ENCODE measurements at regions of chr7 and their contacts with region 1.

Region 1: DNA sequence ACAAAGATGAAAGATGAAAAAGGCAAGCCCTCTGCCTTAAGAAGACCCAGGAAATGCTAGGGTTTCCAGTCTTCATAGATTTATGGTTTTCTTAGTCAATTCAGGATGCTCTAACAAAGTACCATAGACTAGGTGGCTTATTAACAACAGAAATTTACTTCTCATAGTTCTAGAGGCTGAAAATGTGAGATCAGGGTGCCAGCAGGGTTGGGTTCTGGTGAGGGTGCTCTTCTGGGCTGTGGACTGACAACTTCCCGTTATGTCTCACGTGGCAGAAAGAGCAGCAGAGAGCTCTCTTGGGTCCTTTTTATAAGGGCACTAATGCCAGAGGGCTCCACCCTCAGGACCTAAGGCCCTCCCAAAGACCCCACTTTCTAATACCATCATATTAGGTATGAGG is 23.7 kb downstream of the ELMO1 start:
- H3K4me3 Mint-ChIP-seq: peak overlapping the region; percentile 17
- H3K27ac Mint-ChIP-seq: peak overlapping the region; percentile 85
- H3K4me1 Mint-ChIP-seq: peaks cover 62% of the 10 kb centered on the region
- H3K27me3 Mint-ChIP-seq: no peaks in the 10 kb centered on the region

Region 2: GRCh38 chr7:37315772-37316715 is 109.0 kb before region 1 on chr7:
- intact Hi-C with region 1: no loop called
- H3K4me3 Mint-ChIP-seq: no peak overlapping the region
- H3K27ac Mint-ChIP-seq: peak overlapping the region; percentile 67
- H3K4me1 Mint-ChIP-seq: peaks cover 42% of the 10 kb centered on the region
- H3K27me3 Mint-ChIP-seq: no peaks in the 10 kb centered on the region

Region 3: DNA sequence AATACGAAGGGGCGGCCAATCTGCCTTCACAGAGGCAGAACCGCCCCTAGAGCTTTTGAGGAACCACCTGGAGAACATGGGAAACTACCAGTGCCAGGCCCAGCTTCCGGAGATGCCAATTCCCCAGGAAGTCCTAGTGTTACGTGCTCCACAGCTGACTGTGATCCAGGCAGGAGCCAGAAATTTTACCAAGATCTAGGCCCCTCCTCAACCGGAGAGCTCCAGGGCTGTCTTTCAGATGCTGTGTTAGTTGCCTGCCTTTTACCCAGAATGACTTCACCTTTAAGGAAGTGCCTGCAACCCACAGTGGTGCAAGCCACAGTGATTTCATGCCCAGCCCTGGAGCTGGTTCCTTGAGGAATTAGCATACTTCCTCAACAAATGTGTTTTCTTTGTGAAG is 39.2 kb before region 1 on chr7:
- intact Hi-C with region 1: loop called (anchors 5 kb)
- H3K4me3 Mint-ChIP-seq: no peak overlapping the region
- H3K27ac Mint-ChIP-seq: no peak overlapping the region
- H3K4me1 Mint-ChIP-seq: peaks cover 35% of the 10 kb centered on the region
- H3K27me3 Mint-ChIP-seq: no peaks in the 10 kb centered on the region

Region 4: GRCh38 chr7:37408291-37409228 is 16.4 kb before region 1 on chr7:
- intact Hi-C with region 1: loop called (anchors 2 kb)
- H3K4me3 Mint-ChIP-seq: peak overlapping the region; percentile 62
- H3K27ac Mint-ChIP-seq: peak overlapping the region; percentile 84
- H3K4me1 Mint-ChIP-seq: peaks cover 84% of the 10 kb centered on the region
- H3K27me3 Mint-ChIP-seq: no peaks in the 10 kb centered on the region